ENCODE measurements at regions of chr19 and their contacts with region 1.

Region 1: GRCh38 chr19:58466760-58467589 is at the start of gene ZNF324:
- DNase-seq: peak; percentile 97 to 99
- ATAC-seq: peak; percentile 92 to 97 (median 95)
- H3K4me3 ChIP-seq: peak within 1 kb of the TSS; percentile 58
- H3K4me3 Mint-ChIP-seq: peak within 1 kb of the TSS; percentile 89
- H3K27ac ChIP-seq: peak within 1 kb of the TSS; percentile 73
- H3K27ac Mint-ChIP-seq: peak within 1 kb of the TSS; percentile 84 to 92
- H3K4me1 ChIP-seq: peaks cover 18% of the 10 kb centered on the region
- H3K4me1 Mint-ChIP-seq: peaks cover 16 to 21% of the 10 kb centered on the region in 2 donors
- H3K27me3 ChIP-seq: no peaks in the 10 kb centered on the region
- H3K27me3 Mint-ChIP-seq: no peaks in the 10 kb centered on the region
- CTCF ChIP-seq: no peak
- total RNA-seq, gene ZNF324: 21.3 to 23.7 (median 23.3) TPM

Region 2: DNA sequence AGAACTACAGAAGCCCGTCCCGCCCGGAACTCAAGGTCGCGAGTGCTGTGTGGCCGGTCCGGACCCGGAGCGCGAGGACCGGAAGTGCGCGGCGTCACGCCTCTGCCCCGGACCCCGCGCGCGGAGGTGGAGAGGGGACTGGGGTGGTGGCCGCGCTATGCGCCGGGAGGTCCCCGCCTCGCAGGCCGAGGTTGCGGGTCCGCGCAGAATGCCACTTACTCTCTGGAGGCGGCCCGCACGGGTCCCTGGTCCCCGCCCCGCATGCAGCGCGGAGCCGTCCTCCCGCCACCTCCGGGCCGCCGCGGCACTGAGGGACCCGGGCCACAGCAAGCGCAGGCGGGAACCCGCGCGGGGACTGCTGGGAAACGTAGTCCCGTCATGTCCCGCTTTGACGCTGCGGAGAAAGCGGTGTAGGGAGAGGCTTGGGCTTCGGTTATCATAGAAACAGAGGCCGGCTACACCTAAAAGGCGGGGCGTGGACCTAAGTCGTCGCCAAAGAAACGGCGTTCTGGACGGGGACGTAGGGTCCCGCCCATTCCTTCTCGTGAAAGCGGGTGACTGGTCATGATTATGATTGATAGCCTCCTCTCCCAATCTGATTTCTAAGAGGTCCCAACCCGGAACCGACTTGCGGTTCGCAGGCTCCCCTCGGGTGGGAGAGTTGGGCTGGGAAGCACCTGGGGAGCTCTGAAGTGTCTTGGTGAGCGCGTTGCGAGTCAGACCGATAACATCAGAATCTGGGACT is 86.1 kb before region 1 on chr19 and contains the start of gene ZNF837:
- intact Hi-C with region 1: loop called (anchors 2 kb)
- DNase-seq: peak; percentile 95 to 100
- ATAC-seq: peak; percentile 85 to 94 (median 86)
- H3K4me3 ChIP-seq: peak within 1 kb of the TSS; percentile 50
- H3K4me3 Mint-ChIP-seq: peak within 1 kb of the TSS; percentile 89
- H3K27ac ChIP-seq: peak within 1 kb of the TSS; percentile 92
- H3K27ac Mint-ChIP-seq: peak within 1 kb of the TSS; percentile 93 to 94
- H3K4me1 ChIP-seq: peaks cover 37% of the 10 kb centered on the region
- H3K4me1 Mint-ChIP-seq: peaks cover 13 to 29% of the 10 kb centered on the region in 2 donors
- H3K27me3 ChIP-seq: no peaks in the 10 kb centered on the region
- H3K27me3 Mint-ChIP-seq: no peaks in the 10 kb centered on the region
- CTCF ChIP-seq: no peak
- total RNA-seq, gene ZNF837: 0.63 to 1.4 (median 1.3) TPM

Region 3: DNA sequence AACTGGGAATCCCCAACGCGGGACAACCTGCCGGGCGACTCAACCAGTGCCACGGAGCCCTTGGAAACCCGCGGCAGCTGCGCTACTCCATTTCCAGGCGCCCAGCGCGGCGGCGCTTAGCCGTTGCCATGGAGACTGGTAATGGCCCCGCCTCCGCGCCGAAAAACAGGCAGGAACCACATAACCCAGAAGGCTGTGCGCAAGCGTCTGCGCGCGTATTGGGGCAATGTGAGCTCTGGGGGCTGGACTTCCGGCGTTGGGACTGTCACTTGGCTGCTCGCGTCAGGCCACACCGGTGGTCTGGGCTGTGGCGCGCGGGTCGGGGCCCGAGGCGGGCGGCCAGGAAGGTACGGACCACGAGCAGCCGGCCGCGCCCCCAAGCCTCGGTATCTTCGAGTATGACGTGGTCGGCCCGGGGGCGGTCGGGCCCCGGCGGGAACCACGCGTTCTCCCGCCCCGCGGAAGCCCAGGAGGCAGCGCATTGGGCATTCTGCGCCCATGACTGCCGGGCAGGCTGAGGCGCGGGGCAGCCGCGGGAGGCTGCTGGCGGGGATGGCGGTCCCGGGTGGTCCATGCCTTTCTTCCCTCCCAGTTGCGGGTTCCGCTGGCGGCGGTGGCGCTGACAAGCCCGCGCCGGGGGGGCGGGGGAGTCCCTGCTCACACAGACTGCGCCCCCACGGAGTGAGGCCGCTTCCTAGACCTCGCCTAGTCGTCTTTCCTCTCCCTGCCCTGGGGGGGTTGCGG is 15.4 kb before region 1 on chr19 and contains the start of gene ZNF324B:
- intact Hi-C with region 1: loop called (anchors 1 kb)
- DNase-seq: peak; percentile 95 to 99
- ATAC-seq: peak; percentile 95 to 98 (median 95)
- H3K4me3 ChIP-seq: peak within 1 kb of the TSS; percentile 53
- H3K4me3 Mint-ChIP-seq: peak within 1 kb of the TSS; percentile 91
- H3K27ac ChIP-seq: peak within 1 kb of the TSS; percentile 52
- H3K27ac Mint-ChIP-seq: peak within 1 kb of the TSS; percentile 84 to 89
- H3K4me1 ChIP-seq: peaks cover 15% of the 10 kb centered on the region
- H3K4me1 Mint-ChIP-seq: peaks cover 19 to 26% of the 10 kb centered on the region in 2 donors
- H3K27me3 ChIP-seq: no peaks in the 10 kb centered on the region
- H3K27me3 Mint-ChIP-seq: peaks cover 18 to 30% of the 10 kb centered on the region in 2 donors
- CTCF ChIP-seq: no peak
- total RNA-seq, gene ZNF324B: 10.4 to 11.4 (median 11.4) TPM

Measured in natural killer cell (primary cell).